Lower lobe of right lung (tissue), 2 donors: ENCODE measurements at regions of chr3 and their contacts with region 1.

Region 1: DNA sequence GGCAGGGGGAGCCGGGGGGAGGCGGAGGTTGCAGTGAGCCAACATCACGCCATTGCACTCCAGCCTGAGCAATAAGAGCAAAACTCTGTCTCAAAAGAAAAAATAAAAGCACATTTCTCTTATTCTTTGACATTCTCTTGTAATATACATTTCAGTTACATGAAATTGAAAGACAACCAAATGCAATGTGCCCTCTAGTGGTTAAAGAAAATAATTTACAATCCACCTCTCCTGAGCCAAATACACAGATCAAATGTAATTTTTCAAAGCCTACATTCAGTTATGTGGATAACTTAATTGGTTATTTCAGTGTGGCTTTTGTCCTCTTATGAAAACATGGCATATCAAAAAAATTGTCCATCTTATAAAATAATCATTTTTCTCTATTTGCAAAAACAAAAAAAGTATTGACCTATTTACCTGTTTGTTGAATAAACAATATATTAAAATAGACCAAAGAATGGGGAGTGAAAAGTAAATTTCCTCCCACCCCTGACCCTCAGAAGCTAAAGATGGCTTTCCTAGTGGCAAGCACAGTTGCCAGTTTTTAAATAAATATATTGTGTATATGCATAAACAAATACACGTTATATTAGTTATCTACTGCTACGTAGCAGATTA is 14.2 kb upstream of the U2SURP start:
- DNase-seq: no peak
- ATAC-seq: peak in 1 of 2 donors; percentile 57
- H3K4me3 ChIP-seq: no peak overlapping the region
- H3K27ac ChIP-seq: no peak overlapping the region
- H3K4me1 ChIP-seq: no peaks in the 10 kb centered on the region
- H3K27me3 ChIP-seq: no peaks in the 10 kb centered on the region
- CTCF ChIP-seq: peak; percentile 62

Region 2: GRCh38 chr3:142586803-142587406 is 400.3 kb before region 1 on chr3:
- intact Hi-C with region 1: loop called (anchors 10 kb)
- DNase-seq: no peak
- ATAC-seq: peak; percentile 87 to 89
- H3K4me3 ChIP-seq: no peak overlapping the region
- H3K27ac ChIP-seq: no peak overlapping the region
- H3K4me1 ChIP-seq: no peaks in the 10 kb centered on the region
- H3K27me3 ChIP-seq: no peaks in the 10 kb centered on the region
- CTCF ChIP-seq: peak; percentile 55

Region 3: GRCh38 chr3:142808103-142808917 is 178.9 kb before region 1 on chr3:
- intact Hi-C with region 1: no loop called
- DNase-seq: no peak
- ATAC-seq: no peak
- H3K4me3 ChIP-seq: no peak overlapping the region
- H3K27ac ChIP-seq: no peak overlapping the region
- H3K4me1 ChIP-seq: no peaks in the 10 kb centered on the region
- H3K27me3 ChIP-seq: no peaks in the 10 kb centered on the region
- CTCF ChIP-seq: no peak